MCF 10A (cell line): ENCODE measurements at regions of chr4 and their contacts with region 1.

Region 1: GRCh38 chr4:13733817-13734216 is 106.3 kb upstream of the BOD1L1 start:
- DNase-seq: peak; percentile 4
- H3K4me3 Mint-ChIP-seq: no peak overlapping the region
- H3K27ac Mint-ChIP-seq: no peak overlapping the region
- H3K4me1 Mint-ChIP-seq: no peaks in the 10 kb centered on the region
- H3K27me3 Mint-ChIP-seq: no peaks in the 10 kb centered on the region
- CTCF ChIP-seq: no peak

Region 2: DNA sequence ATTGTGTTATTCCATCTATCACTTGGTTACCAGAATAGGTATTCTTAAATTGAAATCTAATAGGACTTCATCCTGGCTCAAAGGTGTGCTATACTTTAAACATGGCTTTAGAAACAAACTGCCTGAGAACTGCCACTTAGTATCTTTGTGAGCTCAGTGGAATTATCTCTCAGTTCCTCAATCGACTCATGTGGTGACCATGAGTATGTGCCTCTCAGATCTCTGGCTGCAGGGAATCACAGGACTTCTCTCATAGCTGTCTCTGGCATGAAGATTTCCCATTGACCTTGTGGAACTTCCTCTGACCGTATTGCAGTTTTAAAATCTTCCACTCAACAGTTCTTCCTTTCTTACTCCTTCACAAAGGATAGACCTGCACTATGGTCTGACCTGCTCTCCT is 575.6 kb after region 1 on chr4:
- CTCF ChIA-PET with region 1: no interaction called
- POLR2A ChIA-PET with region 1: no interaction called
- intact Hi-C with region 1: loop called (anchors 5 kb)
- DNase-seq: no peak
- H3K4me3 Mint-ChIP-seq: no peak overlapping the region
- H3K27ac Mint-ChIP-seq: no peak overlapping the region
- H3K4me1 Mint-ChIP-seq: peaks cover 19% of the 10 kb centered on the region
- H3K27me3 Mint-ChIP-seq: no peaks in the 10 kb centered on the region
- CTCF ChIP-seq: no peak